ENCODE measurements at regions of chr3 and their contacts with region 1.

Region 1: DNA sequence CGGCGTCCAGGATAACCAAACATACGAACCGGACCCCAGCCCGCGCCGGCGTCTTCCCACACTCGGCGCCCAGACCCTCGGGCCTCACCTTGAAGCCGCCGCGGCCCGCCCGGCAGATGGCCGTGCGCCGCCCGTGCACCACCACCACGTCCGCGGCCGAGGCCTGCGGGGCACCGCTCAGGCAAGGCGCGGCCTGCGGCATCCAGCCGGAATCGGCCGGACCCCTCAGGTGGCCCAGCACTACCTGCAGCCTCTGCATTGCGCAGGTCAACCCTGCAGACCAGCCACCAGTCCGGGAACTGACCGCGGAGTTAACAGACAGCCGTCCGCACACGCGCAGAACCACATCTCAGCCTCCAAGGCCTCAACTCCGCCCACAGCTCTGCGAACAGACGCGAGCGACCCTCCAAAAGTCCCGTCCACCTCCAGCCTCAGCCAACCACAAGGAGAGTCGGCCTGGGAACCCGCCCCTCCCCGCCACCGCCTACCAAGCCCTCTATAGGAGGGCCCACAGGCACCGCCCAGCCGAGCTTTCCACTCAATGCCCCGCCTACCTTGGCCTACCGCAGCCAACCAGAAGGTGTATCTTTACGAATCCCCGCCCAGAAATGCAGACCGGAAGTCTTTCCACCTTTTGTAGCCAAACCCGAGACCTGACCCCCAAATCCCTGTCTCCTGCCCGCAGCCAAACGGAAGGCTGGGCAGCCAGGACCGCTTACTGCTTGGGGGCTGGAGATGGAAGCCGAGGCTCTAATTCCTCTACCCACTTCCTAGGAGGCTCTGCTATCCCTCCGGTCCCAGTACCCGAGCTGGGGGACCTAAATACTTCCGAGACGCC is at the start of gene ACAA1:
- DNase-seq: peak; percentile 100
- ATAC-seq: peak; percentile 89
- H3K4me3 Mint-ChIP-seq: peak within 1 kb of the TSS; percentile 86
- H3K27ac Mint-ChIP-seq: peak within 1 kb of the TSS; percentile 96
- H3K4me1 Mint-ChIP-seq: peaks cover 69% of the 10 kb centered on the region
- H3K27me3 Mint-ChIP-seq: no peaks in the 10 kb centered on the region
- total RNA-seq, gene ACAA1: 99.7 to 104 TPM

Region 2: GRCh38 chr3:37974121-37975083 is 162.6 kb before region 1 on chr3:
- CTCF ChIA-PET with region 1: no interaction called
- POLR2A ChIA-PET with region 1: no interaction called
- DNase-seq: peak; percentile 82
- ATAC-seq: peak; percentile 97
- H3K4me3 Mint-ChIP-seq: no peak overlapping the region
- H3K27ac Mint-ChIP-seq: peak overlapping the region; percentile 1
- H3K4me1 Mint-ChIP-seq: peaks cover 6% of the 10 kb centered on the region
- H3K27me3 Mint-ChIP-seq: peaks cover 2% of the 10 kb centered on the region

Region 3: GRCh38 chr3:38101811-38102443 is 35.1 kb before region 1 on chr3:
- CTCF ChIA-PET with region 1: no interaction called
- POLR2A ChIA-PET with region 1: no interaction called
- DNase-seq: no peak
- ATAC-seq: no peak
- H3K4me3 Mint-ChIP-seq: no peak overlapping the region
- H3K27ac Mint-ChIP-seq: no peak overlapping the region
- H3K4me1 Mint-ChIP-seq: no peaks in the 10 kb centered on the region
- H3K27me3 Mint-ChIP-seq: peaks cover 22% of the 10 kb centered on the region

Region 4: DNA sequence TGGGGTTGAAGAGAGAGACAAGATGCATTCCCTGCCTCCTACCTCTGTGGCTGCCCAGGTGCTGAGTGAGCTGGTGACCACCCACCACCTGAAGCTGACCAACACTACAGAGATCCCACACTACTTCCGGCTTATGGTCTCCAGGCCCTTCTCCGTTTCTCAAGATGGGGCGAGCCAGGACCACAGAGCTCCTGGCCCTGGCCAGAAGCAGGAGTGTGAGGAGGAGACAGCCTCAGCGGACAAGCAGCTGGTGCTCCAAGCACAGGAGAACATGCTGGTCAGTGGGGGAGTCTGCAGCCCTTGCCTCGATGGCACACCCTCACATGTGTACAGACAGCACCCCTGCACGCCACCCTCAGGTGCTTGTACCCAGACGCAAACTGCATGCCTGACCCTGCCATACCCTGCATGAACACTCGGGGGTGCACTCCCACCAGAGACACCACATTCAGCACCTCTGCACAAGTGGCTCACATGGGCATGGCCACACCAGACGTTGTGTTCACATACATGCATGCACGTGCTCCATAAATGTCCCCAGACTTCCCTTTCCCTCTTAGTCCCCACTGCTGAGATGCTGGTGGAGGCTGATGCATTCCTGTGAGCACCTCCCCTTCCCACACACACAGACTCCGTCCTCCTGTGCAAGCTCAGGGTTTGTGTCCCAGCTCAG is 19.1 kb before region 1 on chr3:
- CTCF ChIA-PET with region 1: interaction called, 7 read pairs
- POLR2A ChIA-PET with region 1: interaction called, 10 read pairs
- DNase-seq: peak; percentile 84
- ATAC-seq: peak; percentile 81
- H3K4me3 Mint-ChIP-seq: no peak overlapping the region
- H3K27ac Mint-ChIP-seq: peak overlapping the region; percentile 19
- H3K4me1 Mint-ChIP-seq: peaks cover 5% of the 10 kb centered on the region
- H3K27me3 Mint-ChIP-seq: no peaks in the 10 kb centered on the region

Region 5: GRCh38 chr3:38154033-38154494 is 17.1 kb after region 1 on chr3:
- CTCF ChIA-PET with region 1: interaction called, 3 read pairs
- POLR2A ChIA-PET with region 1: interaction called, 11 read pairs
- DNase-seq: no peak
- ATAC-seq: no peak
- H3K4me3 Mint-ChIP-seq: no peak overlapping the region
- H3K27ac Mint-ChIP-seq: no peak overlapping the region
- H3K4me1 Mint-ChIP-seq: peaks cover 42% of the 10 kb centered on the region
- H3K27me3 Mint-ChIP-seq: no peaks in the 10 kb centered on the region

Measured in activated CD8-positive, alpha-beta T cell treated with anti-CD3 and anti-CD28 coated beads, Interleukin-2, amount 10 ng/mL, durations not matched to agents 7 days and 5 days (primary cell).